CD4-positive, alpha-beta T cell (primary cell): ENCODE measurements at regions of chr7 and their contacts with region 1.

Region 1: DNA sequence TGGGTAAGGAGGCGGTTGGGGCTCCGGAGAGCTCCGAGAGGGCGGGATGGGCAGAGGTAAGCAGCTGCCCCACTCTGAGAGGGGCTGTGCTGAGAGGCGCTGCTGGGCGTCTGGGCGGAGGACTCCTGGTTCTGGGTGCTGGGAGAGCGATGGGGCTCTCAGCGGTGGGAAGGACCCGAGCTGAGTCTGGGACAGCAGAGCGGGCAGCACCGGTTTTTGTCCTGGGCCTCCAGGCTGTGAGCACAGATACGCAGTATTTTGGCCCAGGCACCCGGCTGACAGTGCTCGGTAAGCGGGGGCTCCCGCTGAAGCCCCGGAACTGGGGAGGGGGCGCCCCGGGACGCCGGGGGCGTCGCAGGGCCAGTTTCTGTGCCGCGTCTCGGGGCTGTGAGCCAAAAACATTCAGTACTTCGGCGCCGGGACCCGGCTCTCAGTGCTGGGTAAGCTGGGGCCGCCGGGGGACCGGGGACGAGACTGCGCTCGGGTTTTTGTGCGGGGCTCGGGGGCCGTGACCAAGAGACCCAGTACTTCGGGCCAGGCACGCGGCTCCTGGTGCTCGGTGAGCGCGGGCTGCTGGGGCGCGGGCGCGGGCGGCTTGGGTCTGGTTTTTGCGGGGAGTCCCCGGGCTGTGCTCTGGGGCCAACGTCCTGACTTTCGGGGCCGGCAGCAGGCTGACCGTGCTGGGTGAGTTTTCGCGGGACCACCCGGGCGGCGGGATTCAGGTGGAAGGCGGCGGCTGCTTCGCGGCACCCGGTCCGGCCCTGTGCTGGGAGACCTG is 26.0 kb downstream of the PRSS2 start:
- DNase-seq: peak in 6 of 14 experiments; percentile 15 to 68 (median 54)
- ATAC-seq: peak; percentile 5
- H3K4me3 ChIP-seq: peak overlapping the region; percentile 100
- H3K4me3 Mint-ChIP-seq: peak overlapping the region; percentile 97
- H3K27ac ChIP-seq: peak overlapping the region; percentile 95 to 99
- H3K27ac Mint-ChIP-seq: peak overlapping the region; percentile 98
- H3K4me1 ChIP-seq: peaks cover 67% of the 10 kb centered on the region
- H3K4me1 Mint-ChIP-seq: peaks cover 77% of the 10 kb centered on the region
- H3K27me3 ChIP-seq: no peaks in the 10 kb centered on the region
- H3K27me3 Mint-ChIP-seq: no peaks in the 10 kb centered on the region
- CTCF ChIP-seq: no peak

Region 2: GRCh38 chr7:142308326-142308725 is 488.5 kb before region 1 on chr7:
- CTCF ChIA-PET with region 1: no interaction called
- POLR2A ChIA-PET with region 1: interaction called, 20 read pairs
- intact Hi-C with region 1: no loop called
- DNase-seq: no peak
- ATAC-seq: no peak
- H3K4me3 ChIP-seq: peak overlapping the region; percentile 30
- H3K4me3 Mint-ChIP-seq: no peak overlapping the region
- H3K27ac ChIP-seq: no peak overlapping the region
- H3K27ac Mint-ChIP-seq: peak overlapping the region; percentile 18
- H3K4me1 ChIP-seq: peaks cover 16% of the 10 kb centered on the region
- H3K4me1 Mint-ChIP-seq: peaks cover 27% of the 10 kb centered on the region
- H3K27me3 ChIP-seq: no peaks in the 10 kb centered on the region
- H3K27me3 Mint-ChIP-seq: no peaks in the 10 kb centered on the region
- CTCF ChIP-seq: no peak

Region 3: GRCh38 chr7:142391191-142391992 is 405.4 kb before region 1 on chr7:
- CTCF ChIA-PET with region 1: no interaction called
- POLR2A ChIA-PET with region 1: interaction called, 12 read pairs
- intact Hi-C with region 1: no loop called
- DNase-seq: peak in 13 of 14 experiments; percentile 9 to 68 (median 34)
- ATAC-seq: peak; percentile 68
- H3K4me3 ChIP-seq: peak overlapping the region; percentile 22
- H3K4me3 Mint-ChIP-seq: peak overlapping the region; percentile 69
- H3K27ac ChIP-seq: no peak overlapping the region
- H3K27ac Mint-ChIP-seq: peak overlapping the region; percentile 42
- H3K4me1 ChIP-seq: no peaks in the 10 kb centered on the region
- H3K4me1 Mint-ChIP-seq: peaks cover 9% of the 10 kb centered on the region
- H3K27me3 ChIP-seq: no peaks in the 10 kb centered on the region
- H3K27me3 Mint-ChIP-seq: no peaks in the 10 kb centered on the region
- CTCF ChIP-seq: no peak

Region 4: GRCh38 chr7:142535123-142535779 is 261.5 kb before region 1 on chr7:
- CTCF ChIA-PET with region 1: interaction called, 7 read pairs
- POLR2A ChIA-PET with region 1: interaction called, 28 read pairs
- intact Hi-C with region 1: no loop called
- DNase-seq: peak; percentile 35 to 86 (median 66)
- ATAC-seq: peak; percentile 82
- H3K4me3 ChIP-seq: peak overlapping the region; percentile 15
- H3K4me3 Mint-ChIP-seq: peak overlapping the region; percentile 75
- H3K27ac ChIP-seq: peak overlapping the region; percentile 8 to 57
- H3K27ac Mint-ChIP-seq: peak overlapping the region; percentile 77
- H3K4me1 ChIP-seq: peaks cover 19% of the 10 kb centered on the region
- H3K4me1 Mint-ChIP-seq: peaks cover 41% of the 10 kb centered on the region
- H3K27me3 ChIP-seq: no peaks in the 10 kb centered on the region
- H3K27me3 Mint-ChIP-seq: no peaks in the 10 kb centered on the region
- CTCF ChIP-seq: peak; percentile 64

Region 5: DNA sequence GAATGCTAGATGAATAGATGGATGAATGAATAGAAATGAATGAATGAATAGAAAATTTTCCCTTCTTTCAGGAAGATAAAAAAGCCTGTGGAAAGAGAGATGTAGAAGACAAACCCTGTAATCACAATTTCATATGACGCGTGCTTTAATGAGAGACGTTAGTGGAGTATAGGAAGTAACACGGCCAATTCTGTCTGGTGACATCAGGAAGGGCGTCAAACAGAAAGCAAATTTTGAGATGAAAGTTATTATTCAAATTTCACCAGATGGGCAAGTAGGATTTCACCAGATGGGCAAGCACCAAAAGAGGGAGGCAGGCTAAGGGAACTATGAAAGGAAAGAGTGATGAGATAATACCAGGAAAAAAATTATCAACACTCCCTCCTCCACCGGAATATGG is 176.4 kb before region 1 on chr7:
- CTCF ChIA-PET with region 1: interaction called, 4 read pairs
- POLR2A ChIA-PET with region 1: interaction called, 38 read pairs
- intact Hi-C with region 1: no loop called
- DNase-seq: peak in 3 of 14 experiments; percentile 33 to 49 (median 44)
- ATAC-seq: peak; percentile 46
- H3K4me3 ChIP-seq: no peak overlapping the region
- H3K4me3 Mint-ChIP-seq: peak overlapping the region; percentile 52
- H3K27ac ChIP-seq: no peak overlapping the region
- H3K27ac Mint-ChIP-seq: peak overlapping the region; percentile 74
- H3K4me1 ChIP-seq: no peaks in the 10 kb centered on the region
- H3K4me1 Mint-ChIP-seq: peaks cover 6% of the 10 kb centered on the region
- H3K27me3 ChIP-seq: no peaks in the 10 kb centered on the region
- H3K27me3 Mint-ChIP-seq: no peaks in the 10 kb centered on the region
- CTCF ChIP-seq: no peak

Region 6: DNA sequence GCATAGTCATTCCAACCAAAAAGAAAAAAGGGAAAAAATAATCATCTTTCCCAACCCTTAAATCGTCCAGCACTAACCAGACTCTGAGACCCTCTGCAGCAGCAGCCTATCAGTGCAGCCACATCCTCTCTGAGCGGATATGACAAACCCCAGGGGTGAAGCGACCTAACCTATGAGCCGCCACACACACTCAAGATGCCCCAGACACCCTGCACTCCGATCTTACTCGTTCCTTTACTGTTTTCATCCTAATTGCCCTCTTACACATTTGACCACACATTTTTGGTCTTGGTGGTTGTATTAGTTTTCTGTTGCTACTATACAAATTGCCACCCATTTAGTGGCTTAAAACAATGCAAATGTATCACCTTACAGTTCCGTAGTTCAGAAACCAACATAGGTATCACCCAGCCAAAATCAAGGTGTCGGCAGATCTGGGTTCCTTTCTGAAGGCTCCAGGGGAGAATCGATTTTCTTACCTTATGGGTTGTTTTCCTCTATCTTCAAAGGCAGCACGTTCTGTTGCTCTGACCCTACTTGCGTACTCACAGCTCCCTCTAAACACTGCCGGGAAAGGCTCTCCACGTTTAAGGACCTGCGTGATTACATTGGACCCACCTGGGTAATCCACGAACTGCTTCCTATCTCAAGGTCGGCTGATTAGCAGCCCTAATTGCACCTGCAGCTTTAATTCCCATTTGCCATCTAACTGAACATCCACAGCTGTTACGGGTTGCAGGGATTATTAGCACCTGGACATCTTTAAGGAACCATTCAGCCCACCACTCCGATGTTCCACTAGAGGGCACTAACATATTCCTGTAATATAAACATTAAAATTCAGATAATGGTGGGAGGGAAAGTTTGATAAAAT is 84.8 kb before region 1 on chr7:
- CTCF ChIA-PET with region 1: no interaction called
- POLR2A ChIA-PET with region 1: interaction called, 54 read pairs
- intact Hi-C with region 1: no loop called
- DNase-seq: peak in 8 of 14 experiments; percentile 9 to 66 (median 36)
- ATAC-seq: peak; percentile 56
- H3K4me3 ChIP-seq: peak overlapping the region; percentile 51
- H3K4me3 Mint-ChIP-seq: peak overlapping the region; percentile 84
- H3K27ac ChIP-seq: peak overlapping the region; percentile 40 to 53
- H3K27ac Mint-ChIP-seq: peak overlapping the region; percentile 80
- H3K4me1 ChIP-seq: peaks cover 44% of the 10 kb centered on the region
- H3K4me1 Mint-ChIP-seq: peaks cover 71% of the 10 kb centered on the region
- H3K27me3 ChIP-seq: no peaks in the 10 kb centered on the region
- H3K27me3 Mint-ChIP-seq: no peaks in the 10 kb centered on the region
- CTCF ChIP-seq: peak; percentile 52

Region 7: GRCh38 chr7:142833174-142834048 is 36.6 kb after region 1 on chr7:
- CTCF ChIA-PET with region 1: no interaction called
- POLR2A ChIA-PET with region 1: interaction called, 18 read pairs
- intact Hi-C with region 1: no loop called
- DNase-seq: no peak
- ATAC-seq: no peak
- H3K4me3 ChIP-seq: no peak overlapping the region
- H3K4me3 Mint-ChIP-seq: no peak overlapping the region
- H3K27ac ChIP-seq: no peak overlapping the region
- H3K27ac Mint-ChIP-seq: no peak overlapping the region
- H3K4me1 ChIP-seq: no peaks in the 10 kb centered on the region
- H3K4me1 Mint-ChIP-seq: peaks cover 18% of the 10 kb centered on the region
- H3K27me3 ChIP-seq: no peaks in the 10 kb centered on the region
- H3K27me3 Mint-ChIP-seq: no peaks in the 10 kb centered on the region
- CTCF ChIP-seq: no peak